ENCODE measurements at regions of chr13 and their contacts with region 1.

Region 1: DNA sequence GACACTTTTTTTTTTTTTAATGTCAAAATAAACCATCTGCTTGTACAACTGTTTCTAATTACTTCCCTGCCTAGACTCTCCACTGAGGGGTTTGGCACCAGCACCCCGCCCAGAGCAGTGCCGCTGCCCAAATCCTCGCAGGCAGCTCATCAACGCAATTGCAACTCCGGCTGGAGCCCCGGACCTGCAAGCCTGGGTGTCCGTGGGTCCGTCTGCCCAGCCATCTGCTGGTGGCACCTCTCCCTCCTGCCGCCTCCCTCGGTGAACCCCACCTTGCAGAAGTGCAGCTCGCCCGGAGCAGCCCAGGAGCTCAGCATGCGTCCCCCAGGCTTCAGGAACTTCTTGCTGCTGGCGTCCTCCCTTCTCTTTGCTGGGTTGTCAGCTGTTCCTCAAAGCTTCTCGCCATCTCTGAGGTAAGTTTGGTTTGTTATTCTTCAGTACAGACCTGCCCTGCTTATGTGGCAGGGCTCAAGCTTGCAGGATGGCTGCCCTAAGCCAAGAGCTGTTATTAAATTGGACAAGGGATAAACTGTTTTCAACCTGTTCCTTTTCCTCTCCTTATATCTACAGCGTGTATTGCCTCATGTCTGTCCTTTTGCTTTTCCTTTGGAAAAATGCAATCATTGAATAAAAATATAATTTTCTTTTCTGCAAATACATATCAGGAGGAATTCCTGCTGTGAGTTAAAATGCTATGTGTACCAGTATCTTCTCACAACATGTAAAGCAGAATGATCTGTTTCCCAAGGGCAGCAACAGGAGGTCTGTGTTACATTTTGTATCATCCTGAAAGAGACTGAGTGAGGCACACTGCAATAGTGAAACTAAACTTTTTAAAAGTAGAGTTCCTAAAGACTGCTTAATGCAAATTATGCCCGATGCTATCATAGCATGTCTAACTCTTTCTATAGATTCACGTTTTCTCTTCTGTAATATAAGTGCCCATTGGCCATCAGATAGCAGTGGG is at the start of gene ITGBL1:
- DNase-seq: peak in 2 of 10 donors; percentile 41 to 69
- H3K4me3 ChIP-seq: peak within 1 kb of the TSS; percentile 16 to 71 (median 54)
- H3K27ac ChIP-seq: peak within 1 kb of the TSS in 14 of 59 donors; percentile 10 to 61 (median 29)
- H3K27me3 ChIP-seq: peaks cover 0 to 5% (median 0%) of the 10 kb centered on the region in 45 donors
- CTCF ChIP-seq: no peak
- total RNA-seq, gene ITGBL1: 0.22 to 5.3 (median 1.3) TPM

Region 2: GRCh38 chr13:100454876-100455275 is 997.9 kb before region 1 on chr13:
- intact Hi-C with region 1: no loop called
- DNase-seq: no peak
- H3K4me3 ChIP-seq: no peak overlapping the region
- H3K27ac ChIP-seq: no peak overlapping the region
- H3K27me3 ChIP-seq: no peaks in the 10 kb centered on the region
- CTCF ChIP-seq: no peak

Region 3: GRCh38 chr13:101307181-101307701 is 145.6 kb before region 1 on chr13:
- intact Hi-C with region 1: loop called in 1 of 2 experiments (anchors 10 kb)
- DNase-seq: no peak
- H3K4me3 ChIP-seq: no peak overlapping the region
- H3K27ac ChIP-seq: no peak overlapping the region
- H3K27me3 ChIP-seq: no peaks in the 10 kb centered on the region
- CTCF ChIP-seq: no peak

Region 4: DNA sequence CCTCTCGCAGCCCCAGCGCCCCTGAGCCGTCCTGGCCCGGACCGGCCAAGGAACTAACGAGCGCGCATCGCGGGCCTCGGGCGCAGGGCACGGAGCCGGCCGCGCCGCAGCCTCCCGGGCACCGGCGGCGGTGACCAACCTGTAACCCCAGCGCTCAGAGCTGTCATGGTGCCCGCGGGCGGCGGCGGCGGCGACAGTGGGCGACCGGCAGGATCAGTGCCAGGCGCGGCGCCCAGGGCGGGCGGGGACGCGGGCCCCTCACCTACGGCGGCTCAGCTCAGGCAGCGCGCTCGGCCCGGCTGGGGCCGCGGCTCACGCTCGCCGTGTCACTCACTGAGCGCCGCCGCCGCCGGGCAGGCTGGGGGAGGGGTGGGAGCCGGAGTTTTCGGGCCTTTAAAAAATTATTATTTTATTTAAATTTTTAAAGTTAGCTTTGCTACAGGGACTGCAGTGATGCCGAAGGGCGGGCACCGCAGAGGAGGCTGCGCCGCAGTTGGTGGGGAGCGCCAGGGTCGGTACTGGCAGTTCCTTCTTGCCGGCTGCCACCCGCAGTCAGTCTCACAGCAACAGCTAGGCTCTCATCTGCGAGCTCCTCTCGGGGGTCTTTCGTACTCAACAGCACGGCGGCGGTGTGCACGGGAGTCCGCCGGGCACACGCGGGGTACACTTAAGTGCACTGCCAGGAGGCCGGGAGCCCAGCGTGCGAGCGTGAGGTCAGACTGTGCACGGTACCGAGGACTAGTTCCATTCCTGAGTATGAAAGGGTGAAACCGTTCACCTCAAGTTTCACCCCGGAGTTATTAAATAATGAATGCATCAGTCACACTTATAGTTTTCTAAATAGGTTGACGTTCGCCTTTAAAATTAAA is 36.4 kb before region 1 on chr13 and contains the start of gene NALCN:
- intact Hi-C with region 1: loop called in 1 of 2 experiments (anchors 5 kb)
- DNase-seq: peak; percentile 40 to 73 (median 49)
- H3K4me3 ChIP-seq: peak within 1 kb of the TSS; percentile 62 to 90 (median 78)
- H3K27ac ChIP-seq: peak within 1 kb of the TSS; percentile 78 to 99 (median 92)
- H3K27me3 ChIP-seq: peaks cover 0 to 2% (median 0%) of the 10 kb centered on the region in 45 donors
- CTCF ChIP-seq: peak in 3 of 56 donors; percentile 9 to 17 (median 14)
- total RNA-seq, gene NALCN: 73.7 to 113 (median 91.2) TPM

Measured in dorsolateral prefrontal cortex (tissue), 120 donors.